WTC11 (cell line): ENCODE measurements at regions of chr2 and their contacts with region 1.

Region 1: DNA sequence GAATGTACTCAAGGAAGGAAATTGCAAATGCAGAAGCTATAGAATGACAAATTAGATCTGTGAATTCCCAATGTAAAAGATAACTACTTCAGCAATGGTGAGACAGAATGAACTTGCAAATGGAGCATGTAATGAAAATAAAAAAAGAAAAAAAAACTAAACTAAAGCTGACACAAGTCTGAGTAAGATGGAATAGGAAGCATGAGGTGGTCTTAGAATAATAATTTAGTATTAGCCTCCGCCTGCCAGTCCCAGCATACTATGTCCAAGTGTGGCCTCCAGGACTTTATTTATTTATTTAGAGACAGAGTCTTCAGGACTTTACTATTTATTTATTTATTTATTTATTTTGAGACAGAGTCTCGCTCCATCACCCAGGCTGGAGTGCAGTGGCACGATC is 37.4 kb upstream of the SLC39A10 start:
- DNase-seq: no peak
- ATAC-seq: no peak
- H3K4me3 Mint-ChIP-seq: no peak overlapping the region
- H3K27ac Mint-ChIP-seq: peak overlapping the region; percentile 34
- H3K4me1 Mint-ChIP-seq: peaks cover 40% of the 10 kb centered on the region
- H3K27me3 Mint-ChIP-seq: no peaks in the 10 kb centered on the region
- CTCF ChIP-seq: no peak

Region 2: DNA sequence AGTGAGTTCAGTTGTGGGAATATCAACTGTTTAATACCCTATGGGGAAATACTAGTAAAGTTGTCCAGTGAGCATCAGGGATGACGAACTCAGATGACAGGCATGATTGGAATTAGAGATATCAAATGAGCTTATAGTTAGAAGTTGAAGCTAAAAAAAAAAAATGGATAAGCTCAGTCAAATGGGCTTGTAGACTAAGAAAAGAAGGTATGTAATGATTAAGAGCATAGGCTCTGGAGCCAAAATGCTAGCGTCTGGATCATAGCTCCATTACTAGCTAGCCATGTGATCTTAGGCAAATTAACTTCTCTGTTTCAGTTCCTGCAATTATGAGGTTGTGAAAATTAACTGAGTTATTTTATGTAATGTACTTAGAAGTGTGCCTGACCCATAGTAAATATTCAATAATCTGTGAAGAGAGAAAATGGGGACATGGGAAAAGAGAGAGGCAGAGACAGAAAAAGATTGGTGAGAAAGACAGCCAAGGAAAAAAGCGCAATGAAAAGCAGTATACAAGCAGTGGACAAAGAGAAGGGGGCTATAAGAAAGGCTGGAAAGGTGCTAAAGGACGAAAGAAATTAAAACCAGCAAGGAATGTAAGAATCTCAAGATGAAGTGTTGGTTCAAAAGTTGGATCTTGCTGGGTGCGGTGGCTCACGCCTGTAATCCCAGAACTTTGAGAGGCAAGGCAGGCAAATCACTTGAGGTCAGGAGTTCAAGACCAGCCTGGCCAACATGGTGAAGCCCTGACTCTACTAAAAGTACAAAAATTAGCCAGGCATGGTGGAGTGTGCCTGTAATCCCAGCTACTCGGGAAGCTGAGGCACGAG is 58.2 kb before region 1 on chr2:
- CTCF ChIA-PET with region 1: no interaction called
- POLR2A ChIA-PET with region 1: interaction called, 12 read pairs
- DNase-seq: no peak
- ATAC-seq: no peak
- H3K4me3 Mint-ChIP-seq: no peak overlapping the region
- H3K27ac Mint-ChIP-seq: no peak overlapping the region
- H3K4me1 Mint-ChIP-seq: peaks cover 26% of the 10 kb centered on the region
- H3K27me3 Mint-ChIP-seq: no peaks in the 10 kb centered on the region
- CTCF ChIP-seq: no peak